CD8-positive, alpha-beta T cell (primary cell): ENCODE measurements at regions of chr6 and their contacts with region 1.

Region 1: DNA sequence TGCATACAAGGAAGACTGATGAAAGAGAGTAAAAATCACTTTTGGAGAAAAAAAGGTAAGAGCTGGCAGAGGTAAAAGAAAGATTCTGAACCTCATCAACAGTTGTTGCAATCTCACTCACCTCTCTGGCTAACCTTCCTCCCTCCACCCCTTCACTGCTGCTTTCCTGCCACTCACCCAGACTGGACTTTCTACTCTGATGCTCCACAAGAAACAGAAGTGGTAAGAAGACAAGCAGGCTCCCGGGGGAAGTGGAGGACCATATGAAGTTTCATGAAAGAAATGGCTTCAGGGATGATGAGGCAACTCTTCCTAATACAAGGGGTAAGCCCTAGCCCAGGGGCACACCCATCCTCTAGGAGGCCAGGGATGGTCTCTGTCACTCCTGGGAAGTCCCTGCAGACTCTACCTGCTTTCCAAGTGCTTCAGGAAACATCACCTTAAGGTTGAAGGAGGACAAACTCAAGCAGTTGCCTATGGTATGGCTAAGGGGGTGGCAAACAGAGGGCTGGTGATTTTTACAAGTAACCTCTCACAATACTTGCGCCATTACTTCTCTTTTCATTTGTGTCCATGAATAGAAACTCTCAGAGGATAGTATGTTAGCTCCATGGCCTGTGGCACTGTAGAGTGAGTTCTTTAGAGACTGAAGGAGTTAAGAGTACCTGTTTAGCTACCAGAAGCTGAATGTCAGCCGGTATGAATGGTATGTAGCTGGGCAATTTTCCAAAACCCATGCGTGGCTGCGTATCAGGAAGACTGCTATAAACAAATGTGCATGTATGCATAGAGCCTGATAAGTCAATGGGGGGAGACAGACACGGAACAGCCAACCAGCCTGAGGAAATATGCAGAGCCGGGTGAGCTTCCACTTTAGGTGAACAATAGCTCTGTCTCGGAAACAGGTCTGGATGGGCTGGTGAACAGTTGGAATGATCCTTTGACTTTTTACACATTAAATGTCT is 112.0 kb downstream of the BACH2 start:
- DNase-seq: peak in 4 of 9 experiments; percentile 22 to 66 (median 30)
- ATAC-seq: peak; percentile 19
- H3K4me3 ChIP-seq: no peak overlapping the region
- H3K4me3 Mint-ChIP-seq: peak overlapping the region; percentile 66
- H3K27ac ChIP-seq: peak overlapping the region in 1 of 2 experiments; percentile 34
- H3K27ac Mint-ChIP-seq: peak overlapping the region; percentile 98
- H3K4me1 ChIP-seq: peaks cover 70% of the 10 kb centered on the region
- H3K4me1 Mint-ChIP-seq: peaks cover 78% of the 10 kb centered on the region
- H3K27me3 ChIP-seq: no peaks in the 10 kb centered on the region
- H3K27me3 Mint-ChIP-seq: no peaks in the 10 kb centered on the region
- CTCF ChIP-seq: no peak

Region 2: GRCh38 chr6:90197854-90198496 is 13.4 kb after region 1 on chr6:
- CTCF ChIA-PET with region 1: interaction called, 3 read pairs
- POLR2A ChIA-PET with region 1: interaction called, 6 read pairs
- intact Hi-C with region 1: loop called in 1 of 2 experiments (anchors 2 kb)
- DNase-seq: no peak
- ATAC-seq: no peak
- H3K4me3 ChIP-seq: no peak overlapping the region
- H3K4me3 Mint-ChIP-seq: no peak overlapping the region
- H3K27ac ChIP-seq: no peak overlapping the region
- H3K27ac Mint-ChIP-seq: peak overlapping the region; percentile 87
- H3K4me1 ChIP-seq: peaks cover 74% of the 10 kb centered on the region
- H3K4me1 Mint-ChIP-seq: peaks cover 76% of the 10 kb centered on the region
- H3K27me3 ChIP-seq: no peaks in the 10 kb centered on the region
- H3K27me3 Mint-ChIP-seq: no peaks in the 10 kb centered on the region
- CTCF ChIP-seq: no peak

Region 3: GRCh38 chr6:90222724-90223198 is 38.1 kb after region 1 on chr6:
- CTCF ChIA-PET with region 1: interaction called, 3 read pairs
- POLR2A ChIA-PET with region 1: interaction called, 3 read pairs
- intact Hi-C with region 1: loop called in 1 of 2 experiments (anchors 5 kb)
- DNase-seq: peak in 1 of 9 experiments; percentile 41
- ATAC-seq: no peak
- H3K4me3 ChIP-seq: no peak overlapping the region
- H3K4me3 Mint-ChIP-seq: no peak overlapping the region
- H3K27ac ChIP-seq: no peak overlapping the region
- H3K27ac Mint-ChIP-seq: peak overlapping the region; percentile 52
- H3K4me1 ChIP-seq: peaks cover 73% of the 10 kb centered on the region
- H3K4me1 Mint-ChIP-seq: peaks cover 47% of the 10 kb centered on the region
- H3K27me3 ChIP-seq: no peaks in the 10 kb centered on the region
- H3K27me3 Mint-ChIP-seq: no peaks in the 10 kb centered on the region
- CTCF ChIP-seq: no peak

Region 4: GRCh38 chr6:90458353-90459224 is 274.0 kb after region 1 on chr6:
- CTCF ChIA-PET with region 1: no interaction called
- POLR2A ChIA-PET with region 1: no interaction called
- intact Hi-C with region 1: no loop called
- DNase-seq: peak in 5 of 9 experiments; percentile 27 to 65 (median 45)
- ATAC-seq: peak; percentile 74
- H3K4me3 ChIP-seq: peak overlapping the region in 1 of 2 experiments; percentile 7
- H3K4me3 Mint-ChIP-seq: peak overlapping the region; percentile 32
- H3K27ac ChIP-seq: no peak overlapping the region
- H3K27ac Mint-ChIP-seq: no peak overlapping the region
- H3K4me1 ChIP-seq: peaks cover 37% of the 10 kb centered on the region
- H3K4me1 Mint-ChIP-seq: peaks cover 38% of the 10 kb centered on the region
- H3K27me3 ChIP-seq: no peaks in the 10 kb centered on the region
- H3K27me3 Mint-ChIP-seq: no peaks in the 10 kb centered on the region
- CTCF ChIP-seq: no peak

Region 5: DNA sequence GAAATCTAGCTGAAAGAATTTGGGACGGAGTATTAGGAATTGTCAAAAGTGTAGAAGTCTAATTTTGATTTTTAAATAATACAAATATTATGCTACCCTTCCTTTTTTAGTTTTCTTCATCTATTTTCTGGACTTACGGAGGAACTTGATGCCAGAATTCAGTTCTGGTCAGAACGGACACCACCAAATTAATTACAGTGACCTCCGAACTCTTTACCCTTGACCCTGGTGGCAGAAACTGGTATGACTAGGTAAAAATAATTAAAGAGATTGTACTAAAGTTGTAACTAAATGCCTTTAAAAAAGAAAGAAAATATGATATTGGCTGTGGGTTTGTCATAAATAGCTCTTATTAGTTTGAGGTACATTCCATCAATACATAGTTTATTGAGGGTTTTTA is 1153.4 kb after region 1 on chr6:
- CTCF ChIA-PET with region 1: no interaction called
- POLR2A ChIA-PET with region 1: no interaction called
- intact Hi-C with region 1: no loop called
- DNase-seq: no peak
- ATAC-seq: no peak
- H3K4me3 ChIP-seq: no peak overlapping the region
- H3K4me3 Mint-ChIP-seq: no peak overlapping the region
- H3K27ac ChIP-seq: no peak overlapping the region
- H3K27ac Mint-ChIP-seq: no peak overlapping the region
- H3K4me1 ChIP-seq: no peaks in the 10 kb centered on the region
- H3K4me1 Mint-ChIP-seq: no peaks in the 10 kb centered on the region
- H3K27me3 ChIP-seq: no peaks in the 10 kb centered on the region
- H3K27me3 Mint-ChIP-seq: no peaks in the 10 kb centered on the region
- CTCF ChIP-seq: no peak